Endothelial cell of umbilical vein (primary cell): ENCODE measurements at regions of chr7 and their contacts with region 1.

Region 1: GRCh38 chr7:51162724-51163329 is 153.8 kb downstream of the COBL start:
- DNase-seq: peak; percentile 85
- H3K4me3 ChIP-seq: no peak overlapping the region
- H3K27ac ChIP-seq: no peak overlapping the region
- H3K4me1 ChIP-seq: no peaks in the 10 kb centered on the region
- H3K27me3 ChIP-seq: peaks cover 0 to 16% of the 10 kb centered on the region in 2 experiments
- CTCF ChIP-seq: peak; percentile 83
- POLR2A ChIP-seq: no peak

Region 2: DNA sequence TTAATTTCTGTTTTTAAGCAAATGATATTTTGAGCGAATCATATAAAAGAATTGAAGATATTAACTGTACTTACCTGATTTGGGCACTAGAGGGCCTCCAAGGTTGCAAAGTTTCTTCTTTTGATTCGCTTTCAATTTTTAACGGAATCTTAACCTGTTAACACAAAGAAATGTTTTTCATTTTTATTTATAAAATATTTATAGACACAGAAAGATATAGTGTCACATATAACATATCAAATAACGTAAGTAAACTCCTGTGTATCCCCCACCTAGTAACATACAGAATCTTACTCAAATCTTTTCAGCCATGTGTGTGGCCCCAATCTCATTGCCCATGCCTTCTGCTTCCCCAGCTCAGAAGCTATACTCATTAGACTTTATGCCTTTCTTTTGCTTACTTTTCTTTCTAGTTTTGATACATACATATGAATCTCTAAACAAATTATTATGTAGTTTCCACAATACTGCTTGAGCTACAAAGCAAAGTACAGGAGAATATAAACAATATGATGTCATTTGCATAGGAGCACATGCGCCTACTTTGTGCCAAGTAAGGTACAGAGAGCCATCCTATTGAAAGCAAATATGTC is 1020.3 kb before region 1 on chr7:
- CTCF ChIA-PET with region 1: interaction called, 32 read pairs
- POLR2A ChIA-PET with region 1: no interaction called
- dilution Hi-C with region 1: no loop called
- intact Hi-C with region 1: no loop called
- DNase-seq: peak; percentile 44
- H3K4me3 ChIP-seq: no peak overlapping the region
- H3K27ac ChIP-seq: no peak overlapping the region
- H3K4me1 ChIP-seq: no peaks in the 10 kb centered on the region
- H3K27me3 ChIP-seq: no peaks in the 10 kb centered on the region
- CTCF ChIP-seq: peak; percentile 26 to 49
- POLR2A ChIP-seq: no peak

Region 3: GRCh38 chr7:50418086-50418515 is 744.7 kb before region 1 on chr7:
- CTCF ChIA-PET with region 1: interaction called, 15 read pairs
- POLR2A ChIA-PET with region 1: no interaction called
- dilution Hi-C with region 1: no loop called
- intact Hi-C with region 1: loop called (anchors 2 kb)
- DNase-seq: peak; percentile 77
- H3K4me3 ChIP-seq: no peak overlapping the region
- H3K27ac ChIP-seq: no peak overlapping the region
- H3K4me1 ChIP-seq: peaks cover 12% of the 10 kb centered on the region
- H3K27me3 ChIP-seq: peaks cover 0 to 8% of the 10 kb centered on the region in 2 experiments
- CTCF ChIP-seq: peak; percentile 89 to 94
- POLR2A ChIP-seq: no peak

Region 4: DNA sequence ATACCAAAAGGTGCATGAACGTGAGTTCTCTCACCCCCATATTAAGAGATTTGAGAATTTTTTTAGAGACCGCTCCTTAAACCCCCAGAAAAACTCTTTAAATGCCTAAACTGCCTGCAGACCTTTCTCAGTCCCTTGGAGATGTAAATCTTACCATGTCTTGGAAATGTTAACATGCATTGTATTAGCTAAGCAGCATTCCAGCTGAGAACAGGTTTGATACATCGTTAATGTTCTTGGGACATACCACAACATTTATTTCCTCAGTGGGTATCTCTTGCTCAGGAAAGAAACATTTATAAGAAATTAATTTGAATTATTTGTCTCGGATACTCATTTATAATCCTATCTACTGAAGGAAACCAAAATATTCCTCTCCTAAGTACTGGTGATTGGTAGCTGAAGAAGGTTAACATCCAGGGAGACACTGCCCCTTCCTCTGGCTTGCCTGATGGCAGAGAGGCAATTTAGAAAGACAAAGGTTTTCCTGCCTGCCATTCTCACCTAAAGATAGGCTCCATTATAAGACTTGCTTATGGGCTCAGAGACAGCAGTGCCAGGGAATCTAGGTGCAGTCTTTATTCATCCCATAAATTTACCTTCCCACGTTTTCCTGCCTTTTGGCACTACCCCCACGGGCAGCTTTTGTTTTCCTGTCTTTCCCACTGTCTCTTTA is 12.6 kb after region 1 on chr7:
- CTCF ChIA-PET with region 1: interaction called, 21 read pairs
- POLR2A ChIA-PET with region 1: no interaction called
- dilution Hi-C with region 1: no loop called
- intact Hi-C with region 1: no loop called
- DNase-seq: no peak
- H3K4me3 ChIP-seq: no peak overlapping the region
- H3K27ac ChIP-seq: no peak overlapping the region
- H3K4me1 ChIP-seq: no peaks in the 10 kb centered on the region
- H3K27me3 ChIP-seq: peaks cover 0 to 10% of the 10 kb centered on the region in 2 experiments
- CTCF ChIP-seq: no peak
- POLR2A ChIP-seq: no peak

Region 5: GRCh38 chr7:51224811-51225612 is 62.2 kb after region 1 on chr7:
- CTCF ChIA-PET with region 1: no interaction called
- POLR2A ChIA-PET with region 1: no interaction called
- dilution Hi-C with region 1: no loop called
- intact Hi-C with region 1: no loop called
- DNase-seq: no peak
- H3K4me3 ChIP-seq: no peak overlapping the region
- H3K27ac ChIP-seq: no peak overlapping the region
- H3K4me1 ChIP-seq: no peaks in the 10 kb centered on the region
- H3K27me3 ChIP-seq: no peaks in the 10 kb centered on the region
- CTCF ChIP-seq: no peak
- POLR2A ChIP-seq: no peak

Region 6: GRCh38 chr7:51255536-51256208 is 92.8 kb after region 1 on chr7:
- CTCF ChIA-PET with region 1: no interaction called
- POLR2A ChIA-PET with region 1: no interaction called
- dilution Hi-C with region 1: no loop called
- intact Hi-C with region 1: no loop called
- DNase-seq: no peak
- H3K4me3 ChIP-seq: no peak overlapping the region
- H3K27ac ChIP-seq: no peak overlapping the region
- H3K4me1 ChIP-seq: no peaks in the 10 kb centered on the region
- H3K27me3 ChIP-seq: no peaks in the 10 kb centered on the region
- CTCF ChIP-seq: no peak
- POLR2A ChIP-seq: no peak

Region 7: GRCh38 chr7:51366930-51367613 is 204.2 kb after region 1 on chr7:
- CTCF ChIA-PET with region 1: interaction called, 140 read pairs
- POLR2A ChIA-PET with region 1: no interaction called
- dilution Hi-C with region 1: no loop called
- intact Hi-C with region 1: loop called (anchors 1 kb)
- DNase-seq: peak; percentile 24
- H3K4me3 ChIP-seq: no peak overlapping the region
- H3K27ac ChIP-seq: no peak overlapping the region
- H3K4me1 ChIP-seq: no peaks in the 10 kb centered on the region
- H3K27me3 ChIP-seq: no peaks in the 10 kb centered on the region
- CTCF ChIP-seq: peak; percentile 35 to 57
- POLR2A ChIP-seq: no peak